ENCODE measurements at regions of chr7 and their contacts with region 1.

Region 1: GRCh38 chr7:22726345-22727185 is 435 bp upstream of the IL6 start:
- DNase-seq: peak; percentile 35 to 72
- ATAC-seq: peak; percentile 74 to 89 (median 85)
- H3K4me3 ChIP-seq: peak overlapping the region; percentile 60
- H3K27ac ChIP-seq: peak overlapping the region; percentile 65
- H3K4me1 ChIP-seq: peaks cover 37% of the 10 kb centered on the region
- H3K27me3 ChIP-seq: no peaks in the 10 kb centered on the region
- CTCF ChIP-seq: peak; percentile 68

Region 2: GRCh38 chr7:22121702-22122474 is 604.7 kb before region 1 on chr7:
- intact Hi-C with region 1: no loop called
- DNase-seq: no peak
- ATAC-seq: peak in 2 of 4 donors; percentile 14 to 32
- H3K4me3 ChIP-seq: no peak overlapping the region
- H3K27ac ChIP-seq: peak overlapping the region; percentile 25
- H3K4me1 ChIP-seq: no peaks in the 10 kb centered on the region
- H3K27me3 ChIP-seq: peaks cover 0 to 2% (median 0%) of the 10 kb centered on the region in 3 donors
- CTCF ChIP-seq: no peak

Region 3: GRCh38 chr7:22577396-22578001 is 149.1 kb before region 1 on chr7:
- intact Hi-C with region 1: loop called (anchors 5 kb)
- DNase-seq: peak in 1 of 2 donors; percentile 28
- ATAC-seq: peak; percentile 93 to 99 (median 96)
- H3K4me3 ChIP-seq: no peak overlapping the region
- H3K27ac ChIP-seq: peak overlapping the region; percentile 58
- H3K4me1 ChIP-seq: peaks cover 21% of the 10 kb centered on the region
- H3K27me3 ChIP-seq: no peaks in the 10 kb centered on the region
- CTCF ChIP-seq: no peak

Measured in psoas muscle (tissue), 8 donors.